ENCODE measurements at regions of chr11 and their contacts with region 1.

Region 1: DNA sequence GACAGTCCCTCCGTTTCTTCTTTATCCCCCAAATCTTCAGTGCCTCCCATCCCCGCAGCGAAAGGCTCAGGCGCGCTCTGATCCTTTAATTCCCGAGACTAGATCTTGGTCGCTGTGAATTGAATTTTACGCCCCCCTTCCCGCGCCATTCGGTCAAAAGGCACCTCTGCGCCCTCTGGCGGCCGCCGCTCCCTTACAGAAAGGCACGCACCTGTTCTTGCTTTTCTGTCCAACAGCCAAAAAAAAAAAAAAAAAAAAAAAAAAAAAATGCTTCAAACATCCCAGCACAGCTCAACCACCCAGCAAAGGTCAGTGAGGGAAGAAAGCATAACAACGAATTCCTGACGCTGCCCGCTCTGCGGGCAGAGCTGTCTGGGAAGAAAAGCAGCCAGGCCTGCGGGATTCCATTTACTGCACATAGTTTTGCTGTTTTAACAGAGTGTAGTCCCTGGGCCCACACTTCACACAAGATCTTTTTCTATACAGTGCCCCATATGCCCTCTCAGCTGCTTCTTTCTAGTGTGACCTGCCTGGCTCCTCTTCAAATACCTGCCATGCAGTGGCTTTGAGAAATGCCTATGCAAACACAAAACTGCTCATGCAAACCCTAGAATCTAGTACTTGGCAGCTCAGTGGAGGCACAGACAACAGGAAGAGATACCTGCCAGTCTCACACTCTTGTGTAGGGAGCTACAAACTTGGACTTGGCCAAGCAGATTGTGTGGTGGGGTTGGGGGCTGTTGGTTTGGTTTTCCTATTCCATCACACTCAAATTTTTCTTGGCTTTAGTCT is 1.3 kb upstream of the ESAM start:
- DNase-seq: peak; percentile 90
- ATAC-seq: peak; percentile 33

Region 2: DNA sequence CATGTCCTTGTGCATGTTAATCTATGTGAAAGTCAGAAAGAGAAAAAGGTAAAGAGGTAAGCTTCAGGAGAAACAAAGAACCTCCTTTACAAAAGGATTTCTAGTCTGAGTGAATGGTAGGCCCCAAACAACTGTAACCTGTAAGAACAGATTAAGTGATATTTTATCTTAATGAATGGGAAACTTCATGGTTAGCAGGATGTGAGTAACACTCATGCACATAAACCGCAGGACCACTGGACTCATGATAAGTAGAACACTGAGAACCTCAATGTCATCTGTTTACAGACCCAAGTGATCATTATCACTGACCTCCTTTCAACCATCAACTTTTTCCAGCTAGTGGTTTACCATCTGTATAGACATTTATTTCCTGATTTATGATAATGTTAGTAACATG is 487.3 kb before region 1 on chr11:
- intact Hi-C with region 1: no loop called
- DNase-seq: no peak
- ATAC-seq: no peak

Region 3: DNA sequence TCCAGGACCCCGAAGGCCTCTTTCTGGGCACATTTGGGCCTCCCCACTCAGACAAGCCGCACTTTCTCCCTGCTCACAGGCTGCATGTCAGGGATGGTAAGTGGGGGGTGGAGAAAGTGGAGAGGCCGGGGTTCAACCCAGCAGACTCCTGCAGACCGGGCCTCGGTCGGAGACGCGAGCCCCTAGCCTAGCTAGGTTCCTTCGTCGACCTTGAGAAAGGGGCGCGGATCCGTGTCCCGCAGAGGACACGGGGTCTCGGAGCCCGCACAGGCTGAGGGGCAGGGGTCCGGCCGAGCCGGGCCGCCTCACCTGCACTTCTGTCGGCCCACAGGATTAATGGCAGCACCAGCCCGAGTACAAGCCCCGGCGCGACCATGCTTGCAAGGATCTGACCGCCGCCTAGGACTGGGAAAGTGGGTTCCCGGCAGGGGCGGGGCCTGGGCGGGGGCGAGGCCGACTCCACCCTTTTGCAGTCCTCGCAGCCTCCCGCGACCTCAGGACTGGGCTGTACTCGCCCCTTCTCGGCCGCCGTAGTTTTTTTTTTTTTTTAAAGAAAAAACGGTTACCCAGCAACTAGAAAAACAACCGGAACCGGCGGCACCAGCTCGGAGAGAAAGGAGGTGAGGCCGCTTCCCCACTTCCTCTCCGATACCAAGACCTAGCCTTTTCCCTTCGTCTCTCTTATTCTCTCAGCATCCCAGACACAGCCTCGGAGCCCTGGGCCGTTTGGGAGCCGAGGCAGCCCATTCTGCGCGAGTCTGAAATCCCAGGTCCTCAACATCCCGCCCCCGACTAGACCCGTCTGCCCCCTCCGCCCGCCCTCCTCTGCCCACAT is 89.8 kb before region 1 on chr11 and contains the starts of genes SIAE and SPA17:
- intact Hi-C with region 1: loop called (anchors 1 kb)
- DNase-seq: peak; percentile 96
- ATAC-seq: peak; percentile 100
- total RNA-seq, gene SIAE: 83.1 TPM
- total RNA-seq, gene SPA17: 2.6 TPM

Region 4: GRCh38 chr11:124800226-124800929 is 37.0 kb after region 1 on chr11 and contains the start of gene MSANTD2:
- intact Hi-C with region 1: loop called (anchors 5 kb)
- DNase-seq: peak; percentile 90
- ATAC-seq: peak; percentile 98
- total RNA-seq, gene MSANTD2: 3.8 TPM

Region 5: DNA sequence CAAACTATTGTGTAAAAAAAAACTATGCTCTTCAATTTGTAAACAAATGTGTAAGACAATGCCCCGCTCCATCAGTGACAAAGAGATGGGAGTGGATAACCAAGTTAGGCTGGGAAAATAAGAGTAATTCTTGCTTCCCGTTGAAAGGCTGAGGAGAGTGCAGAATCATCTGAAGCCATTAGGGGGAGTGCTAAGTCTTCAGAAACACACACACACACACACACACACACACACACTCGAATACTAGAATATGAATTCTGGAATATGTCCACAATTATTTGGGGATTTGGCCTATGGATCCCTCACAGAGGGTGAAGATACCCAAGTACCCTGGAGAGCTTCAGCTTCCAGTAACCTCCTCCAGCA is 74.1 kb after region 1 on chr11:
- intact Hi-C with region 1: loop called (anchors 10 kb)
- DNase-seq: no peak
- ATAC-seq: peak; percentile 66